ENCODE measurements at regions of chr5 and their contacts with region 1.

Region 1: GRCh38 chr5:139711067-139711905 is 63.1 kb downstream of the CXXC5 start:
- DNase-seq: peak; percentile 79 to 91 (median 86)
- H3K4me3 ChIP-seq: peak overlapping the region; percentile 32 to 82 (median 63)
- H3K27ac ChIP-seq: peak overlapping the region; percentile 61 to 79
- H3K4me1 ChIP-seq: peaks cover 0 to 54% (median 39%) of the 10 kb centered on the region in 4 experiments
- H3K27me3 ChIP-seq: no peaks in the 10 kb centered on the region

Region 2: GRCh38 chr5:139670369-139671095 is 40.8 kb before region 1 on chr5:
- CTCF ChIA-PET with region 1: interaction called, 15 read pairs
- POLR2A ChIA-PET with region 1: interaction called, 15 read pairs
- DNase-seq: peak; percentile 78 to 98 (median 97)
- H3K4me3 ChIP-seq: peak overlapping the region in 6 of 7 experiments; percentile 20 to 78 (median 54)
- H3K27ac ChIP-seq: peak overlapping the region; percentile 48 to 86
- H3K4me1 ChIP-seq: peaks cover 21 to 96% (median 96%) of the 10 kb centered on the region in 4 experiments
- H3K27me3 ChIP-seq: no peaks in the 10 kb centered on the region

Region 3: DNA sequence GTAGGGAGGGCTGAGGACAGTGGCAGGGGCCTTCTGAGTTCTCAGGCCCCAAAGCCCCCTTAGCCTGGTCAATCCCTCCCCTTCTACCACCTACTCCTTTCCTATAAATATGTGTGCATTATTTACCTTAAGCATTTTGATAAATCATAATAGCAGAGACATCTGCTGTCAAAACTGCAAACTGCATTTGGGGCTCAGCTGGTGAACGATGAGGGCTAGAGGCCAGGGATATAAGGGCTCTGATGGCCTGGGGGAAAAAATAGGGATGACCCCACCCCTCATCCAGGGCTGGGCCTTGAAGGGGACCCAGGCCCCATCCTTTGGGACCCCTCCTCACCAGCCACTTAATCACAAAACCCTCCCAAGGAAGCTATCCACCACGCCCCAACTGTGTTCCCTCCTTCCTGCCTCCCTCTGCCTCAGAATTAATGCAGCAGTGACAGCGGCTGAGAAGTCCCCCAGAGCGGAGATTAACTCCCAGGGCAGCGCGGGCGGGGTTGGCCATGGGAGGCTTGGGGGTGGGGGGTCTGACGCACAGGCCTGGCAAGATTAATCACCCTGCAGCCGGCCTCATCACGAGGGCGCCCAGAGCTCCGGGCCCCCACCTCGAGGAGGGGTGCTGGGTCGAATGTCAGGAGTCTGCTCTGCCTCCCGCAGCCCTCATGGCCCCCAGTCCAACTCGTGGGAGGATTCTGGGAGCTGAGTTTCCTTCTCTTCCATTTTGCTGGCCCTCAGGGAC is 21.1 kb before region 1 on chr5:
- CTCF ChIA-PET with region 1: interaction called, 67 read pairs
- POLR2A ChIA-PET with region 1: interaction called, 4 read pairs
- DNase-seq: peak in 2 of 3 donors; percentile 63 to 64
- H3K4me3 ChIP-seq: peak overlapping the region in 2 of 7 experiments; percentile 36 to 61
- H3K27ac ChIP-seq: peak overlapping the region in 1 of 2 experiments; percentile 32
- H3K4me1 ChIP-seq: peaks cover 0 to 79% (median 45%) of the 10 kb centered on the region in 4 experiments
- H3K27me3 ChIP-seq: no peaks in the 10 kb centered on the region

Region 4: DNA sequence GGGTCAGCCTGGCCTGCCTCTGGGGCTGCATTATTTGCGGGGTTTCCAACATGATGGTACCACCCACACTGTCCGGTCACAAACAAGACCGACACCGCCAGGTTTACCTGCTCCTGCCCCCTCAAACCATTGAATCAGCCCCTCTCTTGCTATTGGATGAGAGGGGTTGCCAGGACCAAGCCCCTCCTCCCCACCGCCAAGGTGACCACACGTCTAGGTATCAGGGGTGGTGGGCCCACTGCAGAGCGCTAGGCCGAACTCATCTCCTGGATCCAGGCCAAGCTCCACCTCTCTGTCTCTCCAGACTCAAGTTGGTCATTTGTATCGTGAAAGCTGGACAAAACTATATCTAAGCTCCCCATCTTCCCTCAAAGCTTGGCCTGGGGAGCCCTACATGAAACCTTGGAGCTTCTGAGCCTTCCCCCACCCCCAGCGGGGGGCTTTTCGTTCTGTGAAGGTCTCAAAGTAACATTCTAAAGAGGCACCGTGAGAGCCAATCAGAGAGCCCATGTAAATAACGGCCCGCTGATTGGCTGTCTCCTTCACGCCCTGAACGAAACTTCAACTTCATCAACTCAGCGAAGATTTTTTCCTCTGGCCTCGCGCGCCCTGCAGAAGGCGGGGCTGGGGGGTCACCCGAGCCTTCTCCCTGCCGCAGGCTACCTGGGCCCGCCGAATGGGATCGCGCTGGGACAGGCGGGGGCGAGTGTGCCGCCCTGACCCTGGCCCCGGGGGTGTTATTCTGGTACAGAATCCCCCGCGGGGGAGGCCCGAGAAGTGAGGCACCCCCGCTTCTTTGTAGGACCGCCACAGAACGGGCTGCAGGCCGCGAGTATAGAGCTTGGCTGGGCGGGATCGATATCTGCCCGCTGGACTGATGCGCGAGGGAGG is 34.8 kb after region 1 on chr5:
- CTCF ChIA-PET with region 1: interaction called, 11 read pairs
- POLR2A ChIA-PET with region 1: interaction called, 6 read pairs
- DNase-seq: peak; percentile 57 to 75 (median 75)
- H3K4me3 ChIP-seq: peak overlapping the region in 3 of 7 experiments; percentile 33 to 68 (median 54)
- H3K27ac ChIP-seq: no peak overlapping the region
- H3K4me1 ChIP-seq: peaks cover 0 to 45% (median 41%) of the 10 kb centered on the region in 4 experiments
- H3K27me3 ChIP-seq: peaks cover 0 to 49% (median 21%) of the 10 kb centered on the region in 5 experiments